ENCODE measurements at regions of chr1 and their contacts with region 1.

Region 1: GRCh38 chr1:183956559-183957188 is 80.9 kb downstream of the COLGALT2 start:
- DNase-seq: peak; percentile 76
- CTCF ChIP-seq: peak; percentile 14

Region 2: GRCh38 chr1:183444243-183444642 is 512.4 kb before region 1 on chr1:
- CTCF ChIA-PET with region 1: no interaction called
- POLR2A ChIA-PET with region 1: no interaction called
- DNase-seq: no peak
- CTCF ChIP-seq: no peak

Region 3: GRCh38 chr1:183968386-183968785 is 11.7 kb after region 1 on chr1:
- CTCF ChIA-PET with region 1: interaction called, 11 read pairs
- POLR2A ChIA-PET with region 1: no interaction called
- DNase-seq: no peak
- CTCF ChIP-seq: no peak